Endothelial cell of umbilical vein (primary cell): ENCODE measurements at regions of chr1 and their contacts with region 1.

Region 1: GRCh38 chr1:234486498-234487448 is 7.8 kb upstream of the TARBP1 start:
- DNase-seq: peak; percentile 84
- H3K4me3 ChIP-seq: no peak overlapping the region
- H3K27ac ChIP-seq: no peak overlapping the region
- H3K4me1 ChIP-seq: peaks cover 7% of the 10 kb centered on the region
- H3K27me3 ChIP-seq: peaks cover 10 to 12% of the 10 kb centered on the region in 2 experiments
- CTCF ChIP-seq: peak; percentile 54 to 55
- POLR2A ChIP-seq: no peak

Region 2: GRCh38 chr1:235093696-235094592 is 607.2 kb after region 1 on chr1:
- CTCF ChIA-PET with region 1: interaction called, 17 read pairs
- POLR2A ChIA-PET with region 1: no interaction called
- dilution Hi-C with region 1: loop called (anchors 10 kb)
- intact Hi-C with region 1: no loop called
- DNase-seq: peak; percentile 78
- H3K4me3 ChIP-seq: no peak overlapping the region
- H3K27ac ChIP-seq: no peak overlapping the region
- H3K4me1 ChIP-seq: no peaks in the 10 kb centered on the region
- H3K27me3 ChIP-seq: peaks cover 0 to 3% of the 10 kb centered on the region in 2 experiments
- CTCF ChIP-seq: peak; percentile 93
- POLR2A ChIP-seq: no peak